Activated naive CD4-positive, alpha-beta T cell treated with anti-CD3 and anti-CD28 coated beads for 36 hours (primary cell): ENCODE measurements at regions of chr10 and their contacts with region 1.

Region 1: GRCh38 chr10:111076191-111076681 is 593 bp upstream of the ADRA2A start:
- DNase-seq: peak; percentile 68
- H3K4me3 Mint-ChIP-seq: peak overlapping the region; percentile 71
- H3K27ac Mint-ChIP-seq: no peak overlapping the region
- H3K4me1 Mint-ChIP-seq: peaks cover 11% of the 10 kb centered on the region
- H3K27me3 Mint-ChIP-seq: peaks cover 55% of the 10 kb centered on the region

Region 2: GRCh38 chr10:111004016-111004415 is 72.2 kb before region 1 on chr10:
- CTCF ChIA-PET with region 1: interaction called, 3 read pairs
- intact Hi-C with region 1: loop called (anchors 2 kb)
- DNase-seq: no peak
- H3K4me3 Mint-ChIP-seq: no peak overlapping the region
- H3K27ac Mint-ChIP-seq: no peak overlapping the region
- H3K4me1 Mint-ChIP-seq: peaks cover 4% of the 10 kb centered on the region
- H3K27me3 Mint-ChIP-seq: no peaks in the 10 kb centered on the region

Region 3: GRCh38 chr10:111030042-111030750 is 46.0 kb before region 1 on chr10:
- CTCF ChIA-PET with region 1: no interaction called
- intact Hi-C with region 1: no loop called
- DNase-seq: no peak
- H3K4me3 Mint-ChIP-seq: no peak overlapping the region
- H3K27ac Mint-ChIP-seq: no peak overlapping the region
- H3K4me1 Mint-ChIP-seq: peaks cover 5% of the 10 kb centered on the region
- H3K27me3 Mint-ChIP-seq: no peaks in the 10 kb centered on the region

Region 4: DNA sequence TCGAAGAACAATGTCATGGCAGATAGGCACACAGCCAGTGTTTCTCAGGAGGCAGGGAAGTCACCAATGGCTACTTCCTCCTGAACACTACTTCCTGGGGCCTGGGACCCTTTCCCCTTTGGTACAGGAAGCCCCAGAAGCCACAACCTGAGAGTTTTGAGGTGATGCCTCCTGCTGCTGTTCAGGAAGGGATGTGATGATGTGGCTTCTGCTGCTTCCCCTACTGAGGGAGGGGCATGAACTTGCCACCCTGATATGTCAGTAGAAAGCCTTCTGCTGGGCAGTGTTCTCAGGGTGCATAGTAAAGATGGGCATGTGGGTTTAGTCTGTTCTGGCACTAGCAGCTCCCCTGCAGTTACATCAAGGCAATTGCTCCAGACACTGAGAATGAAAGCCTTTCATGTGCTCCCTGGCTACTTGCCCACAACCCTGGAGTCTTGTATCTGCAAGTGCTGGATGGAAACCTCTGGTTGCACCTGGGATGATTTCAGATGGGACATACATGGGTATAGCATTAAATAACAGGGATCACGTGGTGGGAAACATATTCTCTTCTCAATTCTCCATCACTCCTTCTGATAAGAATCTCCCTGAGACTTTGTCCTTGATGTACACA is 69.9 kb after region 1 on chr10:
- CTCF ChIA-PET with region 1: no interaction called
- intact Hi-C with region 1: no loop called
- DNase-seq: peak; percentile 31
- H3K4me3 Mint-ChIP-seq: no peak overlapping the region
- H3K27ac Mint-ChIP-seq: no peak overlapping the region
- H3K4me1 Mint-ChIP-seq: peaks cover 12% of the 10 kb centered on the region
- H3K27me3 Mint-ChIP-seq: peaks cover 4% of the 10 kb centered on the region

Region 5: GRCh38 chr10:111207500-111207899 is 131.3 kb after region 1 on chr10:
- CTCF ChIA-PET with region 1: interaction called, 11 read pairs
- intact Hi-C with region 1: loop called (anchors 1 kb)
- DNase-seq: peak; percentile 65
- H3K4me3 Mint-ChIP-seq: no peak overlapping the region
- H3K27ac Mint-ChIP-seq: no peak overlapping the region
- H3K4me1 Mint-ChIP-seq: no peaks in the 10 kb centered on the region
- H3K27me3 Mint-ChIP-seq: peaks cover 2% of the 10 kb centered on the region

Region 6: DNA sequence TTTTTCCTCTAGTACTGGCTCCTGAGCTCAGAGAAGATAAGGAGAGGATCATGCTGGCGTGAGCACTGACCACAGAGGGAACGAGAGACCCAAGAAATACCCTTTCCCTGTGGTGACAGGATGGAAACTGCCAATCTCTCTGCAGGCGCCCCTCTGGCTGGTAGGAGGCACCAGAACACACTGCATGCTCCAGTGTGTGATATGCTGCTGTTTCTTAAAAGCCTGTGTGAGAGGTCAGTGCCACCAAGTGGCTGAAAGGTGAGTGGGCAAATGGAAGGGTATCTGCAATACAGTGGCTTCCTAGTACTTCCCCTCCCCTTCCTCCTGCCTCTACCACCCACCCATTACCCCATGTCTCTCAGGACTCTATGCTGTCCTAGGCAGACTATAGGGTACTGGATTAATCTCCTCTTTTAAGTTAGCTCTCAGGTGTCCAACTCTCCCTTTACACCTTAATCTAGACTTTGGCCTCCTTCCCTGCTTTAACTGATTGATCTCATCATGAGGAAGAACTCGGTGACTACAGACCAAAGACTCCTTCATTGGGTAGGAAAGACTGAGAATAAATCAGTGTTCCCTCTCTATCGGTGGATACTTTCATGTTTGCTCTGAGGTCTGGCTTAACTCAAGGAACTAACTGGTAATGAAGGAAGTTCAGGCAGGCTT is 284.2 kb after region 1 on chr10:
- CTCF ChIA-PET with region 1: no interaction called
- intact Hi-C with region 1: loop called (anchors 1 kb)
- DNase-seq: peak; percentile 35
- H3K4me3 Mint-ChIP-seq: no peak overlapping the region
- H3K27ac Mint-ChIP-seq: no peak overlapping the region
- H3K4me1 Mint-ChIP-seq: no peaks in the 10 kb centered on the region
- H3K27me3 Mint-ChIP-seq: peaks cover 13% of the 10 kb centered on the region

Region 7: DNA sequence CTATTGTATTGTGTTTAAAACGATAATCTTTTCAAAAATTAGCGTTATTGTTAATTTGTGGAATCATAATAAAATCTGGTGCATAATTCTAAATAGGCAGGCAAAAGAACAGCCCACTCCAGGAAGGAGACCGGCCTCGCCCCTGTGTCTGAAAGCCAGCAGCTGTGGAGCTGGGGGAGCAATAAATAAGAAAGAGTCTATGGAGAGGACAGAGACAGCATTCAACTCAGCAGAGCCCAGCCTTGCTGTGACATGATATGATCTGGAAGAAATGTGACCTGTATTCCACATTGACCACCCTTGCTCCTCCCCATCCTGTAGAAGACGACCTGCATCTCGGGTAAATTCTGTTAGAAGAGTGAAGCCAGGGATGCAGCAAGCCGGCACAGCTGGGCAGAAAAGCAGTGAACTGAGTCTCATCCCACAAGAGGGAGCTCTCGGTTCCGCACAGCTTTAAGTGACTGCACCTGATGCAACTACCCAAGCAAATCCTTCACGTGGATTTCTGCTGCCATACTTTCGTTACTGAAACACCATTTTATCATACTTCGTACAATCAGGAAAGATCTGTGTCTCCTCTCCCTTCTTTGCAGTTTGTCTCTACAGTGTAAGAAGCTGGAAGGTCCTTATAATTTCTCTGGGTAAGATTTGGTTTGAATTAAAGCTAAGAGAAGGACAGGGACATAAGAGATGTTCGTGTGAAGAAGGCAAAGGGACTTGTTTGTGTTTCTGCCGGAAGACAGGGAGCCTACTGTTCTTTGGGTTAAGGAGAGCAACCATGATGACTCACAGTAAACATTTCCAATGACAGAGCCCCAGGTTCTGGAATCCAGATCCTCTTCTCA is 680.2 kb after region 1 on chr10:
- CTCF ChIA-PET with region 1: no interaction called
- intact Hi-C with region 1: loop called (anchors 10 kb)
- DNase-seq: peak; percentile 33
- H3K4me3 Mint-ChIP-seq: no peak overlapping the region
- H3K27ac Mint-ChIP-seq: no peak overlapping the region
- H3K4me1 Mint-ChIP-seq: no peaks in the 10 kb centered on the region
- H3K27me3 Mint-ChIP-seq: peaks cover 23% of the 10 kb centered on the region